ENCODE measurements at regions of chr1 and their contacts with region 1.

Region 1: DNA sequence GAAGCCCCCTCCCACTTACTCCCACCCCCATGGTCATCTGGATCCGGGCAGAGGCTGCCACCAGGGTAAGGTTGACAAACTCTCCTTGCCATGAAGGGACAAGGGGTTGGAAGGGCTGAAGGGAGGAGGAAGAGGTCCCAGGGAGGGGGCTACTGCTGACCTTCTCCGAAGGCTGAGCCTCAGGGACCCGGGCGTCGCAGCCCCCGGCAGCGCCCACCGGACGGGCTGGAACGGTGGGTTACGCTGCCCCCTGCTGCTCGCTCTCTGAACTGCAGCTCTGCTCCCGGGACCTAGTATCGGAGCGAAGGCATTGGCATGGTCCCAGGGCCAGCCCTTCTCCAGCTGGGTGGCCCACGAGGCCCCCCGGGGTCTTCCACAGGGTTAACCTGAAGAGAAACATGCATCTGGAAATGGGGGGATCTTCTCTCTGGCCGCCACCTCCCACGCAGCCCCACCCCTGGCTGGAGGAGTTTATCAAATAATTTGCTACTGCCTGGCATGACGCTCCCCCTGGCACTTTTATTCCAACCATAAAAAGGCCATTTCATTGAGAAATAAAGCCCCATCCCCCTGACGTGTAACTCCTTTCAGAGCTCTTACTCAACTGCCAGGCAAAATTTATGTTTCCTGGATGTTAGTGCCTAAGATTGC is 70.4 kb upstream of the TARDBP start:
- DNase-seq: peak; percentile 40 to 65
- ATAC-seq: peak in 2 of 8 donors; percentile 31 to 55
- H3K4me3 ChIP-seq: no peak overlapping the region
- H3K27ac ChIP-seq: no peak overlapping the region
- H3K4me1 ChIP-seq: peaks cover 5 to 32% (median 17%) of the 10 kb centered on the region in 9 donors
- H3K27me3 ChIP-seq: peaks cover 0 to 26% (median 0%) of the 10 kb centered on the region in 7 donors
- CTCF ChIP-seq: peak; percentile 74 to 96 (median 89)

Region 2: GRCh38 chr1:10494754-10495474 is 447.1 kb before region 1 on chr1:
- intact Hi-C with region 1: loop called in 3 of 10 experiments (anchors 10 kb)
- DNase-seq: peak; percentile 65 to 68
- ATAC-seq: peak; percentile 69 to 92 (median 86)
- H3K4me3 ChIP-seq: peak overlapping the region in 6 of 10 donors; percentile 23 to 47 (median 35)
- H3K27ac ChIP-seq: peak overlapping the region in 6 of 10 donors; percentile 11 to 82 (median 51)
- H3K4me1 ChIP-seq: peaks cover 0 to 36% (median 23%) of the 10 kb centered on the region in 9 donors
- H3K27me3 ChIP-seq: no peaks in the 10 kb centered on the region
- CTCF ChIP-seq: peak; percentile 80 to 92 (median 88)

Region 3: GRCh38 chr1:10694633-10695627 is 247.1 kb before region 1 on chr1:
- intact Hi-C with region 1: no loop called
- DNase-seq: peak; percentile 90 to 91
- ATAC-seq: peak; percentile 23 to 92 (median 77)
- H3K4me3 ChIP-seq: peak overlapping the region; percentile 21 to 62 (median 56)
- H3K27ac ChIP-seq: peak overlapping the region; percentile 75 to 92 (median 88)
- H3K4me1 ChIP-seq: peaks cover 16 to 66% (median 46%) of the 10 kb centered on the region in 9 donors
- H3K27me3 ChIP-seq: peaks cover 0 to 3% (median 0%) of the 10 kb centered on the region in 7 donors
- CTCF ChIP-seq: no peak

Region 4: DNA sequence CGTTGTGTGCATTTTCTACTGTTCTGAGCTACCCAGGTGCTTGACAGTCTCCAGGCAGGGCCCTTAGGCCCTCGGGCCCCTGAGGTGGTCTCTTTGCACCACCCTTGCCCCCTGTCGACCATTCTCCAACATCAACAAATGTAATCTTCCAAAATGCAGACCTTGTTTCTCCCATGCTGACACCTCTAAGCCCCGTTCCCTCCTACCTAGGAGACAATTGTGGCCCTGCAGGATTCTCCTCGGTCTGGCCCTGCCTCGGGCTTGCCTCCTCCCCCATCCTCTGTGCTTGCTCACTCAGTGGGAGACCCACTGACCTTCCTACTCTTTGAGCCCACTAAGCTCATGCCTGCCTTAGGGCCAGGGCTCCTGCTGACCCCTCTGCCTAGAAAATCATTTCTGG is 33.8 kb before region 1 on chr1:
- intact Hi-C with region 1: loop called in 1 of 10 experiments (anchors 1 kb)
- DNase-seq: no peak
- ATAC-seq: no peak
- H3K4me3 ChIP-seq: no peak overlapping the region
- H3K27ac ChIP-seq: no peak overlapping the region
- H3K4me1 ChIP-seq: peaks cover 0 to 7% (median 0%) of the 10 kb centered on the region in 9 donors
- H3K27me3 ChIP-seq: peaks cover 0 to 27% (median 18%) of the 10 kb centered on the region in 7 donors
- CTCF ChIP-seq: no peak

Region 5: GRCh38 chr1:10960411-10961299 is 18.6 kb after region 1 on chr1:
- intact Hi-C with region 1: no loop called
- DNase-seq: peak; percentile 83 to 86
- ATAC-seq: peak; percentile 76 to 89 (median 80)
- H3K4me3 ChIP-seq: peak overlapping the region in 5 of 10 donors; percentile 4 to 22 (median 7)
- H3K27ac ChIP-seq: peak overlapping the region in 8 of 10 donors; percentile 5 to 71 (median 54)
- H3K4me1 ChIP-seq: peaks cover 0 to 22% (median 8%) of the 10 kb centered on the region in 9 donors
- H3K27me3 ChIP-seq: peaks cover 0 to 26% (median 9%) of the 10 kb centered on the region in 7 donors
- CTCF ChIP-seq: peak; percentile 66 to 88 (median 84)

Region 6: DNA sequence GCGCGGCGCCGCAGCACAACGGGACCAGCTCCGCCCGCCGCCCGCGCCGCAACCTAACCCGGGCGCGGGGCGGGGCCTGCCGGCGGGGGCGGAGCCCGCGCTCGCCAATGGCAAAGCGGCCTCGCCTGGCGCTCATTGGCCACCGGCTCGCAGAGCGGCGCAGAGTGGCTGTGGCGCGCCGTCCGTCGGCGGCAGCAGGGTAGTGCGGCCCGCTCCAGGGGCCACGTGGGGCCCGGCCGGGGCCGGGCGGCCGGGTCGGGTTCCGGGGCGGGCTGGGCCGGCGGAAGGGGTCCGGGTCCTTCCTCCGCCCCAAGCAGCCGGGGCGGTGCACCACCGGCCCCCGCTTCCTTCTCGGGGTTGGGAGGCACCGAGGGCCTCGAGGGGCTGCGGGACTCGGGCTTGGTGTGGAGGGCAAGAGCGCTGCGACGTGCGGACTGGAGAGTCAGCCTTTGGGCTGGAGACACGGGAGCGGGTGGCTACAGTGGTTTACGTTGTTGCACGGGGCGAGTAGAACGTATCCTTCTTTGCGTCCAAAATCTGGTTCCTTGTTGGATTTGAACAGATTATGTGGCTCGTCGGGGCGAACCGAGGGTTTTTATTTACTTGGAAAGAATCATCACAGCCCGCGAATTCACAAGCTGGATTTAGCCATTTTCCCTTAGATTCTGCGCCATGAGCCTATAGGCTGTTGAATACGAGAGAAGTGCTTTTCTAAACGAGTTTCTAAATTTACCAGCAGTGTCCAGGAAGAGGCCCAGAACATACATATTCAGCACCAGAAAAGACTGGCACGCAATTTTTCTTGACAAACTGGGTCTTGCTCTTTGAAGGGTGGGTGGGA is 118.2 kb after region 1 on chr1 and contains the start of gene SRM:
- intact Hi-C with region 1: no loop called
- DNase-seq: peak; percentile 87 to 93
- ATAC-seq: peak; percentile 99 to 100 (median 99)
- H3K4me3 ChIP-seq: peak within 1 kb of the TSS; percentile 59 to 99 (median 95)
- H3K27ac ChIP-seq: peak within 1 kb of the TSS in 9 of 10 donors; percentile 63 to 88 (median 79)
- H3K4me1 ChIP-seq: peaks cover 8 to 32% (median 22%) of the 10 kb centered on the region in 9 donors
- H3K27me3 ChIP-seq: no peaks in the 10 kb centered on the region
- CTCF ChIP-seq: peak; percentile 17 to 80 (median 53)
- total RNA-seq, gene SRM: 35.4 to 80.6 (median 49.8) TPM

Measured in heart right ventricle (tissue), 16 donors.